IMR-90 (cell line): ENCODE measurements at regions of chrX and their contacts with region 1.

Region 1: DNA sequence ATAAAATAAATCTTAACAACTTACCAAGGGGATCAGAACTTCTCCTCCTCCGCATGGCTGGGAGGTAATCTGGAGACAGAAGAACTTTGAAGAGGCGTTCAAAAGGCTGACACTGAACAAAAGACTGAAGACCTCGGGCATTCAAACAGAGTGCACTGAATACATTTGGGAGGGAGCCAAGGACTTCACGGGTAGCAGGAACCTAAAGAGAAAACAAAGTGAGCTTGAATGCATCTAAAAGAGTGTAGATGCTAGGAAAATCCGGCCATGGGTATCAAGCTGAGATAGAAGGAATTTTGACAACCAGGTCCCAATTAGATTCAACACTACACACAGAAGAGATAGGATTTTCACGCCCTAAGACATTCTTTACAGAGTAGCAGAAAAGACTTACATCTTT is 69.6 kb downstream of the HUWE1 start:
- DNase-seq: no peak
- ATAC-seq: no peak
- H3K4me3 ChIP-seq: no peak overlapping the region
- H3K27ac ChIP-seq: no peak overlapping the region
- H3K4me1 ChIP-seq: no peaks in the 10 kb centered on the region
- H3K27me3 ChIP-seq: no peaks in the 10 kb centered on the region; the same call in 1 of the 2 replicates
- CTCF ChIP-seq: no peak
- POLR2A ChIP-seq: no peak
- RAD21 ChIP-seq: no peak

Region 2: DNA sequence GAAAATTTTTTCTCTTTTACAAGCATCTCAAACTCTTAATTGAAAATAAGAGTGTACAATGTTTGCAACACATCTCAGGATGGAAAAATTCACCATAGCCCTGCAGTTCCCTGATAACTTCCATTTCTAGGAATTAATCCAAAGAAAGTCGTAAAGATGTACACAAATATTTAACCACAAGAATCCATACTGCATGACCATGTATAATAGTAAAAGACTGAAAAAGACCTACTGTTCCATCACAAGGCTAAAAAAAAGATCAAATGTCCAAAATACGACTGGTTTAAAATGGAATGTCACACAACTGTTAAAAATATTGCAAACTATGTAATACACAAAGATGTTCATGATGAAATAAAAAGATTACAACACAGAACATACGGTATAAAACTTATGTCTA is 37.4 kb after region 1 on chrX:
- CTCF ChIA-PET with region 1: no interaction called
- POLR2A ChIA-PET with region 1: no interaction called
- dilution Hi-C with region 1: no loop called
- in situ Hi-C with region 1: no loop called
- intact Hi-C with region 1: loop called (anchors 5 kb)
- DNase-seq: peak; percentile 37
- ATAC-seq: peak; percentile 64
- H3K4me3 ChIP-seq: no peak overlapping the region
- H3K27ac ChIP-seq: no peak overlapping the region; the same call in 1 of the 2 replicates
- H3K4me1 ChIP-seq: no peaks in the 10 kb centered on the region
- H3K27me3 ChIP-seq: 0 out of 2 replicates have a peak, but pooled peaks cover 2% of the 10 kb centered on the region
- CTCF ChIP-seq: no peak
- POLR2A ChIP-seq: no peak
- RAD21 ChIP-seq: no peak

Region 3: DNA sequence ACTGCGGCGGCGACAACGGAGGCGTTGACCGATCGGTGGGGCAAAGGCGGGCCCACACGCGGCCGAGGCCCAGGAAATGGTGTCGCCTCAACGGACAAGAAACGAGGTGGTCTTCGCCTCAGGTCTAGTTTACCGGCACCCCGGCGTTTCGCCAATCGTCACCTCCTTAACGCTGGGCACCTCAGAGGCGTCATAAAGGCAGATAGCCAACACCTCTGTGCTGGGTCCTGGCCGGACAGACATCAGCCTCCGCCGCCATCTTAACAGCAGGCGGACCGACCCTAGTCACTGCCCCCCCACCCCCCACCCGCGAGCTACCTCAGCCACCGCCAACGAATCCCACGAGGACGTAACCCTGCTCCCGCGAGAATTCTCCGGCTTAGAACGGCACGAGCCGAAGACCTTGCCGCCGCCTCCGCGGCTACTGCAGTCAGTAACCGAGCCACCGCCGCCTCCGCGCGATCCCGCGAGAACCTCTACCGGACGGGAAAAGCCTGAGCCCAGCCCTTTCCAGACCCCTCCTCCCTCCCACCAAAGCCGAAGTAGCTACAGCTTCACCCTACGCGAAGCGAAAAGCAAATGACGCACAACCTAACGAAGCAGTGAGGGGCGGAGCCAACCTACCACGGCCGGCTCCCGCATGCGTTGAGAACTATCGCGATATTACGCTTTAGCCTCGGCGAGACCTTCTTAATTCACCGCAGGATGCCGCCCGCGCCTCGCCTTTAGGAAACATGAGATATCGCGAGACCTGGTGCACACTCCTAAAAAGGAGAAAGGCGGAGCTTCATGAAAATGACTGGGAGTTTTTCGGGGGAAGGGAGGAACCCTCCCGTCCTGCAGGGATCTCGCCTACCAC is 66.8 kb after region 1 on chrX:
- CTCF ChIA-PET with region 1: no interaction called
- POLR2A ChIA-PET with region 1: no interaction called
- dilution Hi-C with region 1: no loop called
- in situ Hi-C with region 1: no loop called
- intact Hi-C with region 1: no loop called
- DNase-seq: peak; percentile 98
- ATAC-seq: peak; percentile 76
- H3K4me3 ChIP-seq: peak overlapping the region; percentile 88
- H3K27ac ChIP-seq: peak overlapping the region; percentile 97
- H3K4me1 ChIP-seq: no peaks in the 10 kb centered on the region
- H3K27me3 ChIP-seq: no peaks in the 10 kb centered on the region
- CTCF ChIP-seq: 0 out of 2 replicates have a peak, but pooled peaks have one; percentile 13
- POLR2A ChIP-seq: peak; percentile 94
- RAD21 ChIP-seq: no peak